ENCODE measurements at regions of chrX and their contacts with region 1.

Region 1: DNA sequence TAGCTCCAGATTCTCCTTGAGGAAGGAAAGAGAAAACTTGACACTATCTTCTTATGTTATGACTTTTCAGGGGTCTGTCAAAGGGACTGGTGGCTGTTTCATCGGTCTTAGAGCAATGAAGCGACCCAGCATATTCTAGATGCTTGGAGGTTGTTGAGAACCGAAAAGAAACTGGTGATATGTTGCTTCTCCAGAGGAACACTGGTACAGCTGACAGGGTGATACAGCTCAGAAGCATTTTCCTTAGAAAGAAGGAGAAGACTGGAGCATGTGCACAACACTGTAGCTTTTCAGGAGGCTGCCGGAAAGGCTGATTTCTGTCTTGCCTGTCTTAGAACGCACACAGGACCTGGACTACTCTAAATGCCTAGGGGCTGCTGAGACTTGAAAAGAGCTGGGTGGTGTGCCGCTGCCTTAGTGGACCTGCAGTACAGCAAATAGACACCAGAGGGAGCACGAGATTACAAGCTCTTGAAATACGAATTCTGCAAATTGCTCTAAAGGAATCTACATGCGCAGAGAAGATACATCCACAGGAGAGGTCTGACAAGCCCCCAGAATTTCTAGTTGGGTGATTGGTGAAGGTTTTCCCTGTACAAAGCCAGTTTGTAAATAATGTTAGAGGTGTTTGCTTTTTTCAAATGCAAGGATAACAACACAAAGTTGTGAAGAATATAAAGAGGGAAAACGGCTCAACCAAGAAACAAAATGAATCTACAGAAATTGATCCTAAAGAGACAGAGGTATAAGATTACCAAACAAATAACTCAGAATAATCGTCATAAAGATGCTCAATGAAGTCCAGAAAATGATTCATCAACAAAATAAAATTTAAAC is 223.1 kb upstream of the DMD start:
- DNase-seq: peak; percentile 73
- H3K4me3 ChIP-seq: no peak overlapping the region
- H3K27ac ChIP-seq: no peak overlapping the region
- H3K4me1 ChIP-seq: no peaks in the 10 kb centered on the region
- H3K27me3 ChIP-seq: no peaks in the 10 kb centered on the region
- CTCF ChIP-seq: peak; percentile 28 to 73 (median 60)
- EP300 ChIP-seq: no peak
- POLR2A ChIP-seq: no peak

Region 2: GRCh38 chrX:34300871-34301270 is 866.4 kb after region 1 on chrX:
- intact Hi-C with region 1: loop called (anchors 2 kb)
- DNase-seq: no peak
- H3K4me3 ChIP-seq: no peak overlapping the region
- H3K27ac ChIP-seq: no peak overlapping the region
- H3K4me1 ChIP-seq: no peaks in the 10 kb centered on the region
- H3K27me3 ChIP-seq: no peaks in the 10 kb centered on the region
- CTCF ChIP-seq: peak in 2 of 4 experiments; percentile 5 to 47
- EP300 ChIP-seq: no peak
- POLR2A ChIP-seq: no peak

Measured in sigmoid colon (tissue), 7 donors.